Activated B cell treated with CpG ODN at 0.5 μM for 24 hours (primary cell): ENCODE measurements at regions of chr15 and their contacts with region 1.

Region 1: DNA sequence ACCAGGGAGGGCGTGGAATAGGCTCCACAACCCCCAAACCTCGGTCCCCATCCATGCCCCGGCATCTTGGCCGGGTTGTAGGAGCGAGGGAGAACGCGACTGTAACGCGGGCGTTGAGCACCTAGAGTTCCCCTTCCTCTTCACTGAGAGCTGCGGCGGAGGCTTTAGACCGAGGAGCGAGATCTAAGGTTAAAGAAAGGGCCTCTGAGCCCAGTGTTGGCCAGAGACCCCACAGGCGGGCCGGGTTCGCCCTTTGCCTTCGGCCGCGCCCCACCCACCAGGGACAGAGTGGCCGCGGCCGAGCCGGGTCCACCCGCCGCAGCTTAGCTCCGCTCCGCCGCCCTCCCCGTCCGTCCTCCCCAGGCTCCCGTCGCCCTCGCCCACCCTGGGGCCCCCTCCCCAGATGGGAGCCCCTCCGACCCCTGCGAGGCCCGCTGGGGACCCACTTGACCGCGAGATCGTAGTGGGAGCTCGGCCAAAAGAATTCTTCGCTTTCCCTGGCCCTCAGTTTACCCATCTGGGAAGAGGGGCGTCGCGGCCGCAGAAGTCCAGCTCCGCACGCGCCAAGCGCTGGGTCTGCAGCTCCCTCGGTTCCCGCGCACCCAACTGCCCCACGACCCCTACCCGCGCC is 425 bp downstream of the ANPEP start:
- DNase-seq: peak; percentile 25
- ATAC-seq: peak; percentile 67
- H3K4me3 Mint-ChIP-seq: peak overlapping the region; percentile 81
- H3K27ac Mint-ChIP-seq: no peak overlapping the region
- H3K4me1 Mint-ChIP-seq: peaks cover 11% of the 10 kb centered on the region
- H3K27me3 Mint-ChIP-seq: peaks cover 32% of the 10 kb centered on the region
- CTCF ChIP-seq: no peak

Region 2: DNA sequence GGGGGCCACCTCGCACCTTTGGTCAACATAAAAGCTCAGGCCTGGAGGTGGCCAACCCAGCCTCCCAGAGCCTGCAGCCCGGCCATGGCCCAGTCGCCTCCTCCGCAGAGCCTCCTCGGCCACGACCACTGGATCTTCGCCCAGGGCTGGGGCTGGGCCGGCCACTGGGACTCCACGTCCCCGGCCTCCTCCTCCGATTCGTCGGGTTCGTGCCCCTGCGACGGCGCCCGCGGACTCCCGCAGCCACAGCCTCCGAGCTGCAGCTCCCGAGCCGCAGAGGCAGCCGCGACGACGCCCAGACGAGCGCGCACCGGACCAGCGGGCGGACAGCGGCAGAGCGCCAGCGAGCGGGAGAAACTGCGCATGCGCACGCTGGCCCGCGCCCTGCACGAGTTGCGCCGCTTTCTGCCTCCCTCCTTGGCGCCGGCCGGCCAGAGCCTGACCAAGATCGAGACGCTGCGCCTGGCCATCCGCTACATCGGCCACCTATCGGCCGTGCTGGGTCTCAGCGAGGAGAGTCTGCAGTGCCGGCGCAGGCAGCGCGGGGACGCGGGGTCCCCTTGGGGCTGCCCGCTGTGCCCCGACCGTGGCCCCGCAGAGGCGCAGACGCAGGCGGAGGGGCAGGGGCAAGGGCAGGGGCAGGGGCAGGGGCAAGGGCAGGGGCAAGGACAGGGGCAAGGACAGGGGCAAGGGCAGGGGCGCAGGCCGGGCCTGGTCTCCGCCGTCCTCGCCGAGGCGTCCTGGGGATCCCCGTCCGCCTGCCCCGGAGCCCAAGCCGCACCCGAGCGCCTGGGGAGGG is 37.8 kb before region 1 on chr15 and contains the start of gene MESP2:
- CTCF ChIA-PET with region 1: no interaction called
- POLR2A ChIA-PET with region 1: no interaction called
- intact Hi-C with region 1: loop called (anchors 2 kb)
- DNase-seq: peak; percentile 61
- ATAC-seq: peak; percentile 43
- H3K4me3 Mint-ChIP-seq: peak within 1 kb of the TSS; percentile 77
- H3K27ac Mint-ChIP-seq: no peak within 1 kb of the TSS
- H3K4me1 Mint-ChIP-seq: peaks cover 15% of the 10 kb centered on the region
- H3K27me3 Mint-ChIP-seq: no peaks in the 10 kb centered on the region
- CTCF ChIP-seq: no peak
- total RNA-seq, gene MESP2: 0.40 TPM in 1 of 2 replicates, not detected in the other